Activated naive CD4-positive, alpha-beta T cell treated with anti-CD3 and anti-CD28 coated beads for 36 hours (primary cell): ENCODE measurements at regions of chr13 and their contacts with region 1.

Region 1: DNA sequence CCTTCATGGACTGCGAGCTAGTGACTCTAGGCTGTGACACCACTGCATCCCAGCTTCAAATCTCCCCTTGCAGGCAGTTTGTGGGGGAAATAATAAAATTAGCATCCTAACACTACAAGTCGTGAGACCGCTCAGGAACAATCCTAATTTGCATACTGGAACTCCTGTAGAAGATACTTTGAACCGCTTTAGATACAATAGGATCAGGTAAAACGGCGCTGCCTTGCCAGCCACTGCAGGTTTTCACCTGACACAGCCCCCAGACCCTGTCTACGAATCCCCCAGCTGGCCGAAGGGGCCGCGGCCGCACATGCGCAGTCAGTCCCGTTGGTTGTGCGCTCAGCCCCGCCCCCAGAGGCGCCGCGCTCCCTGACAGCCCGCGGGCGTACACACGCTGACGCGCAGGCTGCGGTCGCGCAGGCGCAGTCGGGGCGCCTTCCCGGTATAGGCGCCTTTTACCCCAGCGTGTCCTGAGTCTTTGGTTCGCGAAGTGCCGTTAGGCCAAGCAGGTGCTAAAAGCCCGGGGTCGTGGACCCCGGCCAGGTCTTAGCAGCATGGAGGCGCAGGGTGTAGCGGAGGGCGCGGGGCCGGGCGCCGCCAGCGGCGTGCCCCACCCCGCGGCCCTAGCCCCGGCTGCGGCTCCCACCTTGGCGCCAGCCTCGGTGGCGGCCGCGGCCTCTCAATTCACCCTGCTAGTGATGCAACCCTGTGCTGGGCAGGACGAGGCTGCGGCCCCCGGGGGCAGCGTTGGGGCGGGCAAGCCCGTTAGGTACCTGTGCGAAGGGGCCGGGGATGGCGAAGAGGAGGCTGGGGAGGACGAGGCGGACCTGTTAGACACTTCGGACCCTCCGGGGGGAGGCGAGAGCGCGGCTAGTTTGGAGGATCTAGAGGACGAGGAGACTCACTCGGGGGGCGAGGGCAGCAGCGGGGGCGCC is at the start of gene RFXAP:
- DNase-seq: peak; percentile 89
- H3K4me3 Mint-ChIP-seq: peak within 1 kb of the TSS; percentile 93
- H3K27ac Mint-ChIP-seq: peak within 1 kb of the TSS; percentile 75
- H3K4me1 Mint-ChIP-seq: peaks cover 45% of the 10 kb centered on the region
- H3K27me3 Mint-ChIP-seq: peaks cover 8% of the 10 kb centered on the region
- total RNA-seq, gene RFXAP: 9.2 to 12.2 TPM

Region 2: GRCh38 chr13:36297366-36298338 is 521.4 kb before region 1 on chr13 and contains the start of gene CCDC169:
- CTCF ChIA-PET with region 1: no interaction called
- intact Hi-C with region 1: loop called (anchors 2 kb)
- DNase-seq: peak; percentile 78
- H3K4me3 Mint-ChIP-seq: peak within 1 kb of the TSS; percentile 86
- H3K27ac Mint-ChIP-seq: no peak within 1 kb of the TSS
- H3K4me1 Mint-ChIP-seq: peaks cover 15% of the 10 kb centered on the region
- H3K27me3 Mint-ChIP-seq: peaks cover 31% of the 10 kb centered on the region
- total RNA-seq, gene CCDC169: 0.50 to 1.0 TPM

Region 3: GRCh38 chr13:36700170-36700569 is 118.9 kb before region 1 on chr13:
- CTCF ChIA-PET with region 1: no interaction called
- intact Hi-C with region 1: no loop called
- DNase-seq: no peak
- H3K4me3 Mint-ChIP-seq: no peak overlapping the region
- H3K27ac Mint-ChIP-seq: no peak overlapping the region
- H3K4me1 Mint-ChIP-seq: no peaks in the 10 kb centered on the region
- H3K27me3 Mint-ChIP-seq: peaks cover 13% of the 10 kb centered on the region

Region 4: GRCh38 chr13:36834299-36834698 is 15.2 kb after region 1 on chr13:
- CTCF ChIA-PET with region 1: interaction called, 4 read pairs
- intact Hi-C with region 1: loop called (anchors 1 kb)
- DNase-seq: no peak
- H3K4me3 Mint-ChIP-seq: no peak overlapping the region
- H3K27ac Mint-ChIP-seq: no peak overlapping the region
- H3K4me1 Mint-ChIP-seq: peaks cover 3% of the 10 kb centered on the region
- H3K27me3 Mint-ChIP-seq: no peaks in the 10 kb centered on the region

Region 5: DNA sequence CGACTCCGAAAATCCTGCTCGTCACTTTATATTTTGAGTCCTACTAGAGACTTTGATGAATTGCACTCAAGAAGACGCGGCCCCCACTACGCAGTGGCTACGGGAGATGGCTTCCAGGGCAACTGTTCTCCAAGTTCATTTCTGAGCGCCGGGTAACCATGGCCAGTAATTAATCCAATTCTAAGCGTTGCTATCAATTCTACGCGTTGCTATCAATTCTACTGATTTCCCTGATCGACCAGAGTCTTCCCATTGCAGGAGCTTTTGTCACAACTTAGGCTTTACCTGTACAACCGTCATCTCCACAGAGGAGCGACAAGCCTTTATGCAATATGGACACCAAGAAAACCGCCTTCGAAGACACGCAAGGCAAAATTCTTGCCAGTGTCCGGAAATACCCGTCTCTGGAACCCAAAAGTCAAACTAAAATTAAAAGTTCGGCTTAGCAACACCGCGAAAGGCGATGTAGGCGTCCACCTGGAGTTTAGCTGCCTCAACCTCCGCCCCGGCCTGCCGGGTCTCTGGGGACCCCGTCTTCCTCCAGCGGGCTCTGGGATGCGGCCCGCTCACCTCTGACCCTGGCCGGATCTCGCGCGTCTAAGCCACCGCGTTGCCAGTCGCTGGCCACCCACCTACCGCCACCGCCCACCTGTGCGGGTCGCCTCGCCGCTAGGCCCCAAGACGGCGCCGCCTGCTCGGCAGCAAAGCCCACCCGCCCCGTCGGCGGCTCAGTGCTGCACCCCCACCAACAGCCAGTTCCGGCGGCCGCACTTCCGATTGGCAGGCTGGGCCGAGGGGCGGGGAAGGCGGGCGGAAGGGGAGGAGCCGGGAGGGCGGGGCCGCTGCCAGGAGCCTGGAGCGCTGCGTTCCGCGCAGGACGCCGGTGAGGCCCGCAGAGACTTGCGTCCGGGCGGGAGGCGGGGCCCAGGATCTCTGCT is 240.1 kb after region 1 on chr13 and contains the start of gene SUPT20H:
- CTCF ChIA-PET with region 1: no interaction called
- intact Hi-C with region 1: loop called (anchors 2 kb)
- DNase-seq: peak; percentile 94
- H3K4me3 Mint-ChIP-seq: peak within 1 kb of the TSS; percentile 97
- H3K27ac Mint-ChIP-seq: peak within 1 kb of the TSS; percentile 90
- H3K4me1 Mint-ChIP-seq: peaks cover 33% of the 10 kb centered on the region
- H3K27me3 Mint-ChIP-seq: no peaks in the 10 kb centered on the region
- total RNA-seq, gene SUPT20H: 51.0 to 57.7 TPM